GM12878 (cell line): ENCODE measurements at regions of chr19 and their contacts with region 1.

Region 1: DNA sequence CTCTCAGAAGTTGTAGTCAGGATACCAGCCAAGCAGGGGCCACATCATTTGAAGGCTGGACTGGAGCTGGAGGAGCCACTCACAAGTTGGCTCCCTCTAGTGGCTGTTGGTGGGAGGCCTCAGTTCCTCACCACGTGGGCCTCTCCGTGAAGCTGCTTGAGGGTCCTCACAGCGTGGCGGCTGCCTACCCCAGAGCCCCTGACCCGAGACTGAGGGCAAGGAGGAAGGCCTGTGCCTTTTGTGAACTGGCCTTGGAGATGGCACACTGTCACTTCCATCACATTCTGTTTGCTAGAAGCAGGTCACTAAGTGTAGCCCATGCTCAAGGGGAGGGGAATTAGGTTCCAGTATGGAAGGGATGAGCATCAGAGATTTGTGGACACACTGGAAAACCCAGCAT is 14.6 kb downstream of the GNA11 start:
- DNase-seq: no peak
- ATAC-seq: peak; percentile 96
- H3K4me3 ChIP-seq: no peak overlapping the region
- H3K27ac ChIP-seq: no peak overlapping the region
- H3K4me1 ChIP-seq: no peaks in the 10 kb centered on the region
- H3K27me3 ChIP-seq: no peaks in the 10 kb centered on the region
- CTCF ChIP-seq: peak; percentile 79 to 93 (median 88)
- EP300 ChIP-seq: no peak
- POLR2A ChIP-seq: no peak
- RAD21 ChIP-seq: peak; percentile 59

Region 2: DNA sequence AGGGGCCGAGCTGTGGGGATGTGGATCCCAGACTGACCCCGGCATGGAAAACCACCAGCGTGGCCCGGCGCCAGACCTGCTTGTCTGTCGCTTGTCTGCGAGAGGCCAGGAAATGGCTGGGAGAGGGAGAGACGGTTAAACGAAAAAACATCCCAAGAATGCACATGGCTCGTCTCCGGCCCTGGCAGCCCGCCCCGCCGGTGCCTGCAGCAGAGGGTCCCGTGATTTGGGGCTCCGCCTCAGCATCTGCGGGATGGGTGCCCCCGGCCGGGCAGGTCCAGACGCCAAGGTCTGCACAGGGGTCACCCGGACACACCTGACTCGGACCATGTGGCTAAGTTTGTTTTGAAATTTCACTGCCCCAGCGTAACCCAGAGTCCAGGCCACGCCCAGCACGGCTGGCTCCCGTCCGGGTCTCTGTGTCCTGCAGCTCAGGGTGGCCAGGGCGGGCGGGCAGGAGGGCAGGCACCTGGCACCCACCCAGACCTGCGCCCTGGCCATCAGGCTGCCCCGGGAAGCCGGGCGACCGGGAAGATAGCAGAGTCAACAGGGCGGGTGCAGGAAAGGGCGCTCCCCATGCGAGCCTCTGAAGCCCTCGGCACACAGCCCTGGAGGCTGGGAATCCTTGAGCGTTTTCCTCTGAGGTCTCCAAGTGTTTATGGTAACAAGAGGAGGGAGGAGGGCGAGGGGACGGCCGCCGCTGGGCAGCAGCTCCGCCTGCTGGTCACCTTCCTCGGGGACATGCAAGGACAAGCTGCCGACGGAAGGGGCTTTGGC is 529.7 kb before region 1 on chr19:
- CTCF ChIA-PET with region 1: no interaction called
- POLR2A ChIA-PET with region 1: no interaction called
- RAD21 ChIA-PET with region 1: no interaction called
- SMC1A ChIA-PET with region 1: no interaction called
- in situ Hi-C with region 1: no loop called
- intact Hi-C with region 1: no loop called
- DNase-seq: no peak
- ATAC-seq: peak; percentile 90
- H3K4me3 ChIP-seq: no peak overlapping the region
- H3K27ac ChIP-seq: no peak overlapping the region
- H3K4me1 ChIP-seq: peaks cover 7% of the 10 kb centered on the region; the same call in 1 of the 2 replicates
- H3K27me3 ChIP-seq: no peaks in the 10 kb centered on the region
- CTCF ChIP-seq: peak; percentile 43 to 79 (median 72); a peak in 5 of 6 replicates
- EP300 ChIP-seq: no peak
- POLR2A ChIP-seq: no peak
- RAD21 ChIP-seq: peak; percentile 78

Region 3: DNA sequence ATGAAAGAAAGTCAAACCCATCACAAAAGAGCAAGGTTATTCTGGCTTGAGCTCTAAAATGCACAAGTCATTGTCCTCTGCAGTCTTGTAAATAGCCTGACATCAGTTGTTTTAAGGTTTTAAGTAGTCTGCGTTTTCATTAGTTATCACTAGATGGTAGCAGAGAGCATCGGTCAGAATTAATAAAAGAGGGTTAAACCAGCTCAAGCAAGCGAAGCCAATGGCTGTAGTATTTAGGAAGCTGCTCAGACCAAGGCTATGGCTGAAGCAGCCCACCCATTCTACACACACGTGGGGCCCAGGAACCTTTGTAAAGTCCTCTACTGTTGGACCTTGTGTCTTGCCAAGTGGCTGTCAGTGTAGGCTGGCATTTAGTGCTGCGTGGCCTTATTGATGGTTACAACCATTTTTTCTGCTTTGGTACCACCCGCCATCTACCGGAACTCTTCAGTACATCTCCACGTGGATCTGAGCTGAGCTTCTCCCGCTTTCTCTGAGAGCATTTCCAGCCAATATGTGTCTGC is 221.3 kb before region 1 on chr19:
- CTCF ChIA-PET with region 1: interaction called, 10 read pairs
- POLR2A ChIA-PET with region 1: no interaction called
- RAD21 ChIA-PET with region 1: no interaction called
- SMC1A ChIA-PET with region 1: interaction called, 3 read pairs
- in situ Hi-C with region 1: no loop called
- intact Hi-C with region 1: no loop called
- DNase-seq: no peak
- ATAC-seq: peak; percentile 89
- H3K4me3 ChIP-seq: no peak overlapping the region
- H3K27ac ChIP-seq: no peak overlapping the region
- H3K4me1 ChIP-seq: peaks cover 3% of the 10 kb centered on the region; the same call in 1 of the 2 replicates
- H3K27me3 ChIP-seq: no peaks in the 10 kb centered on the region
- CTCF ChIP-seq: peak; percentile 61 to 65 (median 61)
- EP300 ChIP-seq: no peak
- POLR2A ChIP-seq: no peak
- RAD21 ChIP-seq: peak; percentile 60

Region 4: DNA sequence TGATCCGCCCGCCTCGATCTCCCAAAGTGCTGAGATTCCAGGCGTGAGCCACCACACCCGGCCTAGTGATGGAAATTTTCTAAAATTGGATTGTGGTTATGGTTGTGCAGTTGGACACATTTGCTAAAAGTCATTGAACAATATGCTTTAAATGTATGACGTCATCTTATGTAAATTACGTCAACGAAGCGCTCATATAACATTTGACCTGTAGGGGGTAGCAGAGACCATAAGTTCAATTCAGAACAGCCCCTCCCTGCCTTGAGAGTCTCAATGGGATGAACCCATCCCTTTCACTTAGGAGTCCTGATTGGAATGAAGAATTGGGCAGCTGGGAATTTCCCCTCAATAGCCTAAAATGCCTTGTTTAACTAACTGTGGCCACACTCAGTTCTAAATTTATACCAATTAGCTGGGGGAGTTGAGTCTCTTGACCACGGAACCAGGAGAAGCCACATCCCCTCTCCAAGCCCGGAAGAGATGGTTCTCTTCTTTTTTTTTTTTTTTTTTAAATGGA is 146.7 kb before region 1 on chr19:
- CTCF ChIA-PET with region 1: interaction called, 33 read pairs
- POLR2A ChIA-PET with region 1: no interaction called
- RAD21 ChIA-PET with region 1: interaction called, 10 read pairs
- SMC1A ChIA-PET with region 1: interaction called, 9 read pairs
- in situ Hi-C with region 1: loop called (anchors 5 kb)
- intact Hi-C with region 1: loop called (anchors 1 kb)
- DNase-seq: peak; percentile 65
- ATAC-seq: peak; percentile 78
- H3K4me3 ChIP-seq: no peak overlapping the region
- H3K27ac ChIP-seq: no peak overlapping the region
- H3K4me1 ChIP-seq: peaks cover 4% of the 10 kb centered on the region; the same call in 1 of the 2 replicates
- H3K27me3 ChIP-seq: no peaks in the 10 kb centered on the region
- CTCF ChIP-seq: peak; percentile 63 to 94 (median 65); a peak in 5 of 6 replicates
- EP300 ChIP-seq: no peak
- POLR2A ChIP-seq: no peak
- RAD21 ChIP-seq: peak; percentile 82

Region 5: DNA sequence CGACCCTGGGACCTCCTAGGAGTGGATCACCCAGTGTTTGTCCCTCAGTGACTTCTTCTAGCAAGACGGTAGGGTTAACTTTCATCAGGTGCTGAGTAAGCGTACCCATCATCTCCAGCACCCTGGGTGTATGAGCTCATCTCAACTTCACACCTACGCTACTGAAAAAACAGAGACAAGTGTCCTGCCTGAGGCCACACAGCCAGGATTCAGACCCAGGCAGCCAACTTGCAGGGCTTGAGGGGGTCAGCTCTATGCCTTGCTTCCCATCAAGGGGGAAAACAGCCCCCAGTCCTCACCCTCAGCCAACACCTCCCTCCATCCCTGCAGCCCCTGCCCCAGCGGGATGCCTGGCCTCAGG is 84.3 kb before region 1 on chr19:
- CTCF ChIA-PET with region 1: no interaction called
- POLR2A ChIA-PET with region 1: no interaction called
- RAD21 ChIA-PET with region 1: no interaction called
- SMC1A ChIA-PET with region 1: no interaction called
- in situ Hi-C with region 1: no loop called
- intact Hi-C with region 1: no loop called
- DNase-seq: no peak
- ATAC-seq: no peak
- H3K4me3 ChIP-seq: no peak overlapping the region
- H3K27ac ChIP-seq: no peak overlapping the region
- H3K4me1 ChIP-seq: no peaks in the 10 kb centered on the region
- H3K27me3 ChIP-seq: peaks cover 8 to 16% of the 10 kb centered on the region in 2 experiments
- CTCF ChIP-seq: no peak
- EP300 ChIP-seq: no peak
- POLR2A ChIP-seq: no peak
- RAD21 ChIP-seq: no peak

Region 6: GRCh38 chr19:3035542-3036118 is 73.1 kb before region 1 on chr19:
- CTCF ChIA-PET with region 1: interaction called, 6 read pairs
- POLR2A ChIA-PET with region 1: no interaction called
- RAD21 ChIA-PET with region 1: interaction called, 10 read pairs
- SMC1A ChIA-PET with region 1: no interaction called
- in situ Hi-C with region 1: no loop called
- intact Hi-C with region 1: no loop called
- DNase-seq: peak; percentile 98
- ATAC-seq: peak; percentile 95
- H3K4me3 ChIP-seq: peak overlapping the region; percentile 90
- H3K27ac ChIP-seq: peak overlapping the region; percentile 71
- H3K4me1 ChIP-seq: peaks cover 16% of the 10 kb centered on the region
- H3K27me3 ChIP-seq: no peaks in the 10 kb centered on the region; a peak in 1 of 4 replicates
- CTCF ChIP-seq: no peak
- EP300 ChIP-seq: no peak
- POLR2A ChIP-seq: peak; percentile 78
- RAD21 ChIP-seq: no peak

Region 7: GRCh38 chr19:3045885-3046697 is 62.7 kb before region 1 on chr19:
- CTCF ChIA-PET with region 1: no interaction called
- POLR2A ChIA-PET with region 1: no interaction called
- RAD21 ChIA-PET with region 1: no interaction called
- SMC1A ChIA-PET with region 1: no interaction called
- in situ Hi-C with region 1: no loop called
- intact Hi-C with region 1: no loop called
- DNase-seq: no peak
- ATAC-seq: 0 out of 3 replicates have a peak, but pooled peaks have one; percentile 18
- H3K4me3 ChIP-seq: no peak overlapping the region
- H3K27ac ChIP-seq: no peak overlapping the region
- H3K4me1 ChIP-seq: no peaks in the 10 kb centered on the region
- H3K27me3 ChIP-seq: peaks cover 0 to 3% of the 10 kb centered on the region in 2 experiments; a peak in 1 of 4 replicates
- CTCF ChIP-seq: no peak
- EP300 ChIP-seq: no peak
- POLR2A ChIP-seq: no peak
- RAD21 ChIP-seq: no peak

Region 8: DNA sequence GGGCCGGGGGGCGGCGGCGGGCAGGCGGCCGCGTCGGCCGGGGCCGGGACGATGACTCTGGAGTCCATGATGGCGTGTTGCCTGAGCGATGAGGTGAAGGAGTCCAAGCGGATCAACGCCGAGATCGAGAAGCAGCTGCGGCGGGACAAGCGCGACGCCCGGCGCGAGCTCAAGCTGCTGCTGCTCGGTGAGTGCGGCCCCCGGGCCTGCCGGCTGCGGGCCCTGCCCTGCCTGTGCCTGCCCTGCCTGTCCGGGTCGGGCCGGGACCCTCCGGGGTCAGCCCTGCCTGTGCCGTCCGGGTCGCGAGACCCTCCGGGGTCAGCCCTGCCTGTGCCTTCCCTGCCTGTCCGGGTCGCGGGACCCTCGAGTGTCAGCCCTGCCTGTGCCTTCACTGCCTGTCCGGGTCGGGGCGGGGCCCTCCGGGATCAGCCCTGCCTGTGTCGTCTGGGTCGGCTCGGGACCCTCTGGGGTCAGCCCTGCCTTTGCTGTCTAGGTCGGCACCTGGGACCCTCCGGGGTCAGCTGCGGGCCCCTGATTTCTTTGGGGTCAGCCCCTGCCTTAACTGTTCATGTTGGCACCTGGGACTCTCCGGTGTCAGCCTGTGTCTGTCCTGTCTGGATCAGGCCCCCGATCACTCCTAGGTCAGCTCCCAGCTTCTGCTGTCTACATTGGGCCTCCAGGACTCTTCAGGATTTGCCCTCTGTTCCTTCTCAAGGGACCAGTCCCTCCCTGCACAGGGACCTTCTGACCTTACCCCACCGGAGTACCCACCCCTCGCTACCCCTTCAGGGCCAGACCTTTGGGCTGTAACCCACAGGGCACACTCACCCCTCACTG is 14.0 kb before region 1 on chr19:
- CTCF ChIA-PET with region 1: interaction called, 10 read pairs
- POLR2A ChIA-PET with region 1: no interaction called
- RAD21 ChIA-PET with region 1: no interaction called
- SMC1A ChIA-PET with region 1: interaction called, 3 read pairs
- in situ Hi-C with region 1: no loop called
- intact Hi-C with region 1: no loop called
- DNase-seq: no peak
- ATAC-seq: peak; percentile 52
- H3K4me3 ChIP-seq: peak overlapping the region; percentile 77
- H3K27ac ChIP-seq: no peak overlapping the region
- H3K4me1 ChIP-seq: peaks cover 17% of the 10 kb centered on the region
- H3K27me3 ChIP-seq: no peaks in the 10 kb centered on the region; a peak in 2 of 4 replicates
- CTCF ChIP-seq: no peak
- EP300 ChIP-seq: no peak
- POLR2A ChIP-seq: no peak
- RAD21 ChIP-seq: no peak

Region 9: GRCh38 chr19:3125900-3126524 is 17.2 kb after region 1 on chr19:
- CTCF ChIA-PET with region 1: interaction called, 28 read pairs
- POLR2A ChIA-PET with region 1: no interaction called
- RAD21 ChIA-PET with region 1: interaction called, 5 read pairs
- SMC1A ChIA-PET with region 1: interaction called, 3 read pairs
- in situ Hi-C with region 1: no loop called
- intact Hi-C with region 1: no loop called
- DNase-seq: no peak
- ATAC-seq: peak; percentile 91
- H3K4me3 ChIP-seq: no peak overlapping the region
- H3K27ac ChIP-seq: no peak overlapping the region
- H3K4me1 ChIP-seq: peaks cover 17% of the 10 kb centered on the region
- H3K27me3 ChIP-seq: no peaks in the 10 kb centered on the region
- CTCF ChIP-seq: peak; percentile 62 to 92 (median 84)
- EP300 ChIP-seq: no peak
- POLR2A ChIP-seq: no peak
- RAD21 ChIP-seq: peak; percentile 39

Region 10: GRCh38 chr19:3234800-3235199 is 126.0 kb after region 1 on chr19:
- CTCF ChIA-PET with region 1: no interaction called
- POLR2A ChIA-PET with region 1: no interaction called
- RAD21 ChIA-PET with region 1: no interaction called
- SMC1A ChIA-PET with region 1: no interaction called
- in situ Hi-C with region 1: no loop called
- intact Hi-C with region 1: no loop called
- DNase-seq: no peak
- ATAC-seq: peak; percentile 45; the same call in 2 of the 3 replicates
- H3K4me3 ChIP-seq: no peak overlapping the region
- H3K27ac ChIP-seq: no peak overlapping the region
- H3K4me1 ChIP-seq: no peaks in the 10 kb centered on the region
- H3K27me3 ChIP-seq: no peaks in the 10 kb centered on the region
- CTCF ChIP-seq: peak; percentile 25 to 50 (median 37); a peak in 3 of 6 replicates
- EP300 ChIP-seq: no peak
- POLR2A ChIP-seq: no peak
- RAD21 ChIP-seq: no peak